ENCODE measurements at regions of chr5 and their contacts with region 1.

Region 1: GRCh38 chr5:78984439-78985115 is 533 bp downstream of the ARSB start:
- DNase-seq: peak; percentile 87 to 92 (median 89)
- ATAC-seq: peak; percentile 78 to 92 (median 86)
- H3K4me3 ChIP-seq: peak overlapping the region; percentile 59 to 96 (median 82)
- H3K27ac ChIP-seq: peak overlapping the region; percentile 90 to 99 (median 96)
- H3K4me1 ChIP-seq: peaks cover 0 to 29% (median 13%) of the 10 kb centered on the region in 12 donors
- H3K27me3 ChIP-seq: no peaks in the 10 kb centered on the region
- CTCF ChIP-seq: peak in 10 of 12 donors; percentile 21 to 62 (median 43)
- POLR2A ChIP-seq: no peak

Region 2: GRCh38 chr5:78908173-78909061 is 76.2 kb before region 1 on chr5:
- intact Hi-C with region 1: loop called in 1 of 10 experiments (anchors 1 kb)
- DNase-seq: peak; percentile 67 to 86 (median 79)
- ATAC-seq: peak; percentile 76 to 94 (median 87)
- H3K4me3 ChIP-seq: peak overlapping the region in 8 of 12 donors; percentile 8 to 33 (median 20)
- H3K27ac ChIP-seq: peak overlapping the region; percentile 26 to 79 (median 68)
- H3K4me1 ChIP-seq: peaks cover 0 to 59% (median 33%) of the 10 kb centered on the region in 12 donors
- H3K27me3 ChIP-seq: no peaks in the 10 kb centered on the region
- CTCF ChIP-seq: peak in 2 of 12 donors; percentile 4 to 10
- POLR2A ChIP-seq: no peak

Measured in heart left ventricle (tissue), 16 donors.